T-cell (primary cell): ENCODE measurements at regions of chr3 and their contacts with region 1.

Region 1: DNA sequence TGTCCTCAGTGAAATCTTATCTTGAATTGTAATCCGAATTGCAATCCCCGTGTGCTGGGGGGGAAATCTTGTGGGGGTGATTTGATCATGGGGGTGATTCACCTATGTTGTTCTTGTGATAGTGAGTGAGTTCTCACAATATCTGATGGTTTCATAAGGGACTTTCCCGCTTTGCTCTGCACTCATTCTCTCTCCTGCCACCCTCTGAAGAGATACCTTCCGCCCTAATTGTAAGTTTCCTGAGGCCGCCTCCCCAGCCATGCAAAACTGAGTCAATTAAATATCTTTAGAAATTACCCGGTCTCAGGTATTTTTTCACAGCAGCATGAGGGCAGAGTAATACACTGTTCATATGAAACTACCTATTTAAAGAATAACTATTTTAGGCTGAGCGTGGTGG is 304.1 kb upstream of the EPHA6 start:
- DNase-seq: no peak
- ATAC-seq: no peak
- H3K4me3 ChIP-seq: no peak overlapping the region
- H3K4me3 Mint-ChIP-seq: no peak overlapping the region
- H3K27ac ChIP-seq: no peak overlapping the region
- H3K27ac Mint-ChIP-seq: no peak overlapping the region
- H3K4me1 ChIP-seq: no peaks in the 10 kb centered on the region
- H3K4me1 Mint-ChIP-seq: no peaks in the 10 kb centered on the region
- H3K27me3 ChIP-seq: no peaks in the 10 kb centered on the region
- H3K27me3 Mint-ChIP-seq: no peaks in the 10 kb centered on the region

Region 2: GRCh38 chr3:96491868-96492267 is 18.5 kb before region 1 on chr3:
- CTCF ChIA-PET with region 1: interaction called in 1 of 2 experiments, 13 read pairs
- POLR2A ChIA-PET with region 1: no interaction called
- DNase-seq: no peak
- ATAC-seq: no peak
- H3K4me3 ChIP-seq: no peak overlapping the region
- H3K4me3 Mint-ChIP-seq: no peak overlapping the region
- H3K27ac ChIP-seq: no peak overlapping the region
- H3K27ac Mint-ChIP-seq: no peak overlapping the region
- H3K4me1 ChIP-seq: no peaks in the 10 kb centered on the region
- H3K4me1 Mint-ChIP-seq: no peaks in the 10 kb centered on the region
- H3K27me3 ChIP-seq: no peaks in the 10 kb centered on the region
- H3K27me3 Mint-ChIP-seq: no peaks in the 10 kb centered on the region

Region 3: DNA sequence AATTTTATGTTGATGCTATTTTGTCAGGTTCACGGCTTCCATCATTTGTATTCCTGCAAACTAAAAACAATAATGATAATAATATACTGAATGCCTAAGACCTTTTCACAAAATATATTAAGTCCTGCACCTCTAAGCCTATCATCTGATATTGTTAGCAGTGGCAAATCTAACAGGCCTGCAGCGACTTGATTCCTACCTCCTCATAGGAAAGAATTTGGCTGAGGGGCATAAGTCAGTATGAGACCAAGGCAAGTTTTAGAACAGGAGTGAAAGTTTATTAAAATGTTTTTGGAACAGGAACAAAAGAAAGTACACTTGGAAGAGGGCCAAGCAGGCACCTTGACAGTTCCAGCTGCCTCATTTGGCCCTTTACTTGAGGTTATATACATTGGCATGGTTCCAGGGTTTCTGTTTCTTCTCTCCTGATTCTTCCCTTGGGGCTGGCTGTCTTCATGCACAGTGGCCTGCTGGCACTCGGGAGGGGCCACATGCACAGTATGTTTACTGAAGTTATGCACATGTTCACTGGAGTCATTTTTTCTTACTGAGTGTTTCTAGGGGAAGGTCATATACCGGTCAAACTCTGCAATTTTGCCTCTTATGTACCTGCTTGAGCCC is 722.2 kb after region 1 on chr3:
- CTCF ChIA-PET with region 1: no interaction called
- POLR2A ChIA-PET with region 1: no interaction called
- DNase-seq: no peak
- ATAC-seq: no peak
- H3K4me3 ChIP-seq: no peak overlapping the region
- H3K4me3 Mint-ChIP-seq: no peak overlapping the region
- H3K27ac ChIP-seq: no peak overlapping the region
- H3K27ac Mint-ChIP-seq: no peak overlapping the region
- H3K4me1 ChIP-seq: no peaks in the 10 kb centered on the region
- H3K4me1 Mint-ChIP-seq: no peaks in the 10 kb centered on the region
- H3K27me3 ChIP-seq: no peaks in the 10 kb centered on the region
- H3K27me3 Mint-ChIP-seq: no peaks in the 10 kb centered on the region